Panc1 (cell line): ENCODE measurements at regions of chr19 and their contacts with region 1.

Region 1: DNA sequence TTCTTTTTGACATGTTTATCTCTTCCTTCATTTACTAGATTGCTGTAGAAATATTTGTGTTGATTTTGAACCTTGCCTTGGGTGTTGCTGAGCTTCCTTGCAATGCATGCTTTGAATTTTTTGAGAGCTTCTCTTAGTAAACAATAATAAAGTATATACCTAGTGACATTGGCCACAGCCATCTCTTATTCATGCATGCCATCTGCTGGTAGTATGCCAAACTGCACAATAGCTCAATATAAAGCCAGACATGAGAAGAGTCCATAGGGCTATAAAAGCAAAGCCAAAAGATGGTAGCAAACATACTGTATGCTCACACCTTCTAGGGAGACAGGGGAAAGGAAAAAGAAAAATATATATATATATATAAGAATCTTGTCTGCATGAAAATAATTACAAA is 18.9 kb upstream of the ZSCAN5A start:
- DNase-seq: no peak
- ATAC-seq: peak; percentile 96
- H3K4me3 ChIP-seq: no peak overlapping the region
- H3K27ac ChIP-seq: no peak overlapping the region
- H3K4me1 ChIP-seq: no peaks in the 10 kb centered on the region
- H3K27me3 ChIP-seq: peaks cover 3% of the 10 kb centered on the region; the same call in 1 of the 2 replicates
- CTCF ChIP-seq: peak; percentile 77; the same call in 1 of the 2 replicates

Region 2: GRCh38 chr19:56066152-56067023 is 267.1 kb before region 1 on chr19:
- CTCF ChIA-PET with region 1: interaction called, 19 read pairs
- POLR2A ChIA-PET with region 1: no interaction called
- in situ Hi-C with region 1: no loop called
- intact Hi-C with region 1: loop called (anchors 5 kb)
- DNase-seq: peak; percentile 41
- ATAC-seq: peak; percentile 88
- H3K4me3 ChIP-seq: peak overlapping the region; percentile 24 to 41
- H3K27ac ChIP-seq: no peak overlapping the region
- H3K4me1 ChIP-seq: peaks cover 5% of the 10 kb centered on the region; the same call in 1 of the 2 replicates
- H3K27me3 ChIP-seq: peaks cover 9% of the 10 kb centered on the region
- CTCF ChIP-seq: peak; percentile 99

Region 3: DNA sequence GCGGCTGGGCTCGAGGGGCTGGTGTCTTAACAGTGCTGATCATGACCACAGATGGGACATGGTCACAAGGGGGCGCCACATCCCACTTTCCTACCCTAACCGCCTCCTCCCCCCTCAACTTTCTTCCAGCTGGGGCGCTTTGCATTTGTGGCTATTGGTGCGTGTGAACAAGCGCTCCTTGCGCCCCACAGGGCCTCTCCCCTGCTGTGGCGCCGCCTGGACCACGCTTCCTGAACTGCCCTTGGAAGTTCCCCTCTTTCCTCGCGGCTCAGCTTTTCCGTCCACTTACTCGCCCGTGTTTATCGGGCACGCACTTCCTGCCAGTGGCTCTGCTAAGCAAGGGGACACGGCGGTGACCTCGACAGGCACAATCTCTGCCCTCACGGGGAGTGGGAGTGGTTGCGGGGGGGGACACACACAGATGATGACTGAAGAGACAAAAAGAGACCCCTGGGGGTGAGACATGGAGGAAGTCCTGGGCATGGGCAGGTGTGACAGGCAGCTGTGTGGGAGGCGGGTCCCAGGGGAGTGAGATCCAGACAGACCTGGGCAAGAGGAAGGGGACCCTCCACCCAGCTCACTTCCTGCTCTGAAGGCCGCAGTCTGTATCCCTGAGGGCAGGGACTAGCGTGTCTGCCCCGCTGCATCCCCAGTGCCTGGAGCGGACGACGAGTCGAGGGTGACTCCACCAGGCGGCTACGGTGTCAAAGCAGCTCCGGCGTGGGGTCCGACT is 252.7 kb before region 1 on chr19:
- CTCF ChIA-PET with region 1: interaction called, 19 read pairs
- POLR2A ChIA-PET with region 1: interaction called, 3 read pairs
- in situ Hi-C with region 1: no loop called
- intact Hi-C with region 1: no loop called
- DNase-seq: no peak
- ATAC-seq: peak; percentile 64
- H3K4me3 ChIP-seq: peak overlapping the region; percentile 32 to 64
- H3K27ac ChIP-seq: peak overlapping the region; percentile 62
- H3K4me1 ChIP-seq: peaks cover 11% of the 10 kb centered on the region
- H3K27me3 ChIP-seq: no peaks in the 10 kb centered on the region
- CTCF ChIP-seq: peak; percentile 78; the same call in 1 of the 2 replicates

Region 4: GRCh38 chr19:56176881-56177280 is 156.6 kb before region 1 on chr19:
- CTCF ChIA-PET with region 1: interaction called, 10 read pairs
- POLR2A ChIA-PET with region 1: no interaction called
- in situ Hi-C with region 1: no loop called
- intact Hi-C with region 1: no loop called
- DNase-seq: no peak
- ATAC-seq: no peak
- H3K4me3 ChIP-seq: no peak overlapping the region
- H3K27ac ChIP-seq: no peak overlapping the region
- H3K4me1 ChIP-seq: no peaks in the 10 kb centered on the region
- H3K27me3 ChIP-seq: no peaks in the 10 kb centered on the region
- CTCF ChIP-seq: no peak

Region 5: GRCh38 chr19:56314562-56315077 is 18.9 kb before region 1 on chr19 and contains the start of gene ZSCAN5A:
- CTCF ChIA-PET with region 1: interaction called, 15 read pairs
- POLR2A ChIA-PET with region 1: no interaction called
- in situ Hi-C with region 1: no loop called
- intact Hi-C with region 1: no loop called
- DNase-seq: peak; percentile 95
- ATAC-seq: peak; percentile 91
- H3K4me3 ChIP-seq: peak within 1 kb of the TSS; percentile 84 to 99
- H3K27ac ChIP-seq: peak within 1 kb of the TSS; percentile 98
- H3K4me1 ChIP-seq: peaks cover 11% of the 10 kb centered on the region; the same call in 1 of the 2 replicates
- H3K27me3 ChIP-seq: no peaks in the 10 kb centered on the region
- CTCF ChIP-seq: no peak
- total RNA-seq, gene ZSCAN5A: 13.8 TPM